WTC11 (cell line): ENCODE measurements at regions of chr7 and their contacts with region 1.

Region 1: GRCh38 chr7:106947244-106947728 is 82.2 kb downstream of the PIK3CG start:
- DNase-seq: peak; percentile 65
- ATAC-seq: peak; percentile 92
- H3K4me3 Mint-ChIP-seq: no peak overlapping the region
- H3K27ac Mint-ChIP-seq: peak overlapping the region; percentile 82; the same call in 1 of the 2 replicates
- H3K4me1 Mint-ChIP-seq: peaks cover 54% of the 10 kb centered on the region
- H3K27me3 Mint-ChIP-seq: no peaks in the 10 kb centered on the region
- CTCF ChIP-seq: peak; percentile 47

Region 2: GRCh38 chr7:106657085-106657991 is 289.9 kb before region 1 on chr7:
- CTCF ChIA-PET with region 1: no interaction called
- POLR2A ChIA-PET with region 1: no interaction called
- DNase-seq: no peak
- ATAC-seq: no peak
- H3K4me3 Mint-ChIP-seq: no peak overlapping the region
- H3K27ac Mint-ChIP-seq: no peak overlapping the region
- H3K4me1 Mint-ChIP-seq: peaks cover 16% of the 10 kb centered on the region
- H3K27me3 Mint-ChIP-seq: no peaks in the 10 kb centered on the region
- CTCF ChIP-seq: no peak

Region 3: DNA sequence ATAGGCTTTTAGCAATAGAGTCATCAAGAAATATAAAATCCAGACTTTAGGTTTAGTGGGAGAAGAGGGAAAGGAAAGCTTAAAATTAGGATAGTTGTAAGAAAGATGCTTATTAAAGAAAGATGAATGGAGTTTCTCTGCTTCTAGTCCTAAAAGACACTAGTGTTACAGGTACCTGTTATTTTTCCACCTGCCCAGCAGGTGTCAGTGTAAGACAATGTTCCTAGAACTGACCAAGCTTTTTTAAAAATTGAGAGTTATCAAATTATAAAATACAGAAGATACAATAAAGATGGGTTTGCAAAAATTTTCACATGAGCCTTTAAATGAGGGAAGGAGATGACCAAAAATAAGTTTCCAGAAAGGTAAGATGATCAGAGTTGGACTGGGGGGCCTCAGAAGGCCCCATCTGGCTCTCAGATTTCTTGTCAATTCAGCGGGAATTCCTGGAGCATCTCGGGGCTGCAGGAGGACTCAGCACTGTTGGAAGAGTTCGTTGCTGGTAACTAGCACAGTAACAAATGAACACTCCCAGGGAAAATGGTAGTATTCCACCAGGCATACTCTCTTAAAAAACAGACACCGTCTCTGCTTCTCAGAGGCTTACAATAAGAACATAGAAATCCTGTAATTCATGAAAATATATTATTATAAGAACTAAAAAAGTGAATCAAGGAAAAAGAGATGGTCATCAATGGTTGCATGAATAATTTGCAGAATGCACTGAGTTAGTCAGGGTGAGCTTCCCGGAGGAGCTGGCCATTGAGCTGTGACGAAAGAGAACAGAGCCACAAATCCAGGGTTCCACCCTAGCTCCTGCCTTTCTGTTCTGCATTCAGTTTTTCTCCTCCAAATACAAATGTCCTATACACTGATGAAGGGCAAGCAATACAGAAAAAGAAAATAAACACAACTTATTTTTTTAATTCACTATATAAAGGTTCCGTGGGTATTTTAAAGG is 154.0 kb before region 1 on chr7:
- CTCF ChIA-PET with region 1: interaction called, 16 read pairs
- POLR2A ChIA-PET with region 1: no interaction called
- DNase-seq: no peak
- ATAC-seq: peak; percentile 80
- H3K4me3 Mint-ChIP-seq: no peak overlapping the region
- H3K27ac Mint-ChIP-seq: no peak overlapping the region
- H3K4me1 Mint-ChIP-seq: peaks cover 3% of the 10 kb centered on the region; the same call in 1 of the 2 replicates
- H3K27me3 Mint-ChIP-seq: no peaks in the 10 kb centered on the region
- CTCF ChIP-seq: peak; percentile 40

Region 4: DNA sequence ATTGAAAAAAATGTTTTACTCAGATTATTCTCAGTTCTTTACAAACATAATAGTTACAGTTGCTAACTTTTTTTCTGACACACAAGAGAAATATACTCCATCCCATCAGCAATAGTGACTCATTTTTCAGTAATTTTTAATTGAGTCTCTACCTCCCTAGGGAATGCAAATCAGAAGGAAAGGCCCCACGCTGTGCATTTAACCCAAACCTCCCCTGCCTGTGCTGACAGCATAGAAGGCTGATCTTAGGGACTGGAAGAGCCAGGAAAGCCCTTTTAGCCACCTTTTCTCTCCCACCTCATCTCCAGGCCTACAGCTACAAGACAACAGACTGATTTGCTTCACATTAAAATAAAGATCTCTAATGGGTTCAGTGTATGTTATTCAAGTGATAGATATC is 106.9 kb before region 1 on chr7:
- CTCF ChIA-PET with region 1: no interaction called
- POLR2A ChIA-PET with region 1: no interaction called
- DNase-seq: peak; percentile 29
- ATAC-seq: peak; percentile 72
- H3K4me3 Mint-ChIP-seq: no peak overlapping the region
- H3K27ac Mint-ChIP-seq: no peak overlapping the region
- H3K4me1 Mint-ChIP-seq: peaks cover 48% of the 10 kb centered on the region
- H3K27me3 Mint-ChIP-seq: no peaks in the 10 kb centered on the region; the same call in none of the 2 replicates
- CTCF ChIP-seq: no peak

Region 5: GRCh38 chr7:106959753-106960152 is 12.5 kb after region 1 on chr7:
- CTCF ChIA-PET with region 1: interaction called, 29 read pairs
- POLR2A ChIA-PET with region 1: no interaction called
- DNase-seq: peak; percentile 58
- ATAC-seq: peak; percentile 99
- H3K4me3 Mint-ChIP-seq: no peak overlapping the region
- H3K27ac Mint-ChIP-seq: no peak overlapping the region
- H3K4me1 Mint-ChIP-seq: peaks cover 14% of the 10 kb centered on the region
- H3K27me3 Mint-ChIP-seq: no peaks in the 10 kb centered on the region; the same call in 1 of the 2 replicates
- CTCF ChIP-seq: peak; percentile 32; the same call in 1 of the 2 replicates

Region 6: GRCh38 chr7:107044347-107045194 is 97.3 kb after region 1 on chr7 and contains the start of gene PRKAR2B:
- CTCF ChIA-PET with region 1: interaction called, 23 read pairs
- POLR2A ChIA-PET with region 1: interaction called, 4 read pairs
- DNase-seq: peak; percentile 83
- ATAC-seq: peak; percentile 85
- H3K4me3 Mint-ChIP-seq: peak within 1 kb of the TSS; percentile 90
- H3K27ac Mint-ChIP-seq: no peak within 1 kb of the TSS
- H3K4me1 Mint-ChIP-seq: peaks cover 41% of the 10 kb centered on the region
- H3K27me3 Mint-ChIP-seq: peaks cover 12% of the 10 kb centered on the region
- CTCF ChIP-seq: no peak
- total RNA-seq, gene PRKAR2B: 17.5 to 29.6 TPM (median 17.7 TPM) in 3 replicates

Region 7: DNA sequence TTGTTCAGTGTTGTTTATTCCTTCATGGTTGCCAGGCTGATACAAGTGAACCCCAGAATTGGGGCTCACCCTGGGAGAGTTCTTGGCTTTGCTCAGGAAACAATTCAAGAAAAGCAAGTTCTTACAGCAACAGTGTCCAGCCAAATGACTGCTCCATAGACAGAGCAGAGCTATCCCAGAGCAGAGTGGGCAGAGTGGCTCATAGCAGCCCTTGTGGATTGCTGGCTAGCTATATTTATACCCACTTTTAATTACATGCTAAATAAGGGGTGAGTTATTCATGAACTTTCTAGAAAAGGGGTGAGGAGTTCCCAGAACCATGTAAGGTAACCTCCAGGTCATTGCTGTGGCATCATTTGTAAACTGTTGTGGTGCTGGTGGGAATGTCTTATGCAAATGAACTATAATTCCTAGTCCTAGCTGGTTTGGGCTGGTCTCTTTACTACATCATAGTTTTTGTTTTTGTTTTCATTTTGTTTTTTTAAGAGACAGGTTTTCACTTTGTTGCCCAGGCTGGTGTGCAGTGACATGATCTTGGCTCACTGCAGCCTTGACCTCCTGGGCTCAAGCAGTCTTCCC is 161.6 kb after region 1 on chr7:
- CTCF ChIA-PET with region 1: no interaction called
- POLR2A ChIA-PET with region 1: no interaction called
- DNase-seq: no peak
- ATAC-seq: no peak
- H3K4me3 Mint-ChIP-seq: no peak overlapping the region
- H3K27ac Mint-ChIP-seq: no peak overlapping the region
- H3K4me1 Mint-ChIP-seq: no peaks in the 10 kb centered on the region
- H3K27me3 Mint-ChIP-seq: no peaks in the 10 kb centered on the region
- CTCF ChIP-seq: no peak

Region 8: DNA sequence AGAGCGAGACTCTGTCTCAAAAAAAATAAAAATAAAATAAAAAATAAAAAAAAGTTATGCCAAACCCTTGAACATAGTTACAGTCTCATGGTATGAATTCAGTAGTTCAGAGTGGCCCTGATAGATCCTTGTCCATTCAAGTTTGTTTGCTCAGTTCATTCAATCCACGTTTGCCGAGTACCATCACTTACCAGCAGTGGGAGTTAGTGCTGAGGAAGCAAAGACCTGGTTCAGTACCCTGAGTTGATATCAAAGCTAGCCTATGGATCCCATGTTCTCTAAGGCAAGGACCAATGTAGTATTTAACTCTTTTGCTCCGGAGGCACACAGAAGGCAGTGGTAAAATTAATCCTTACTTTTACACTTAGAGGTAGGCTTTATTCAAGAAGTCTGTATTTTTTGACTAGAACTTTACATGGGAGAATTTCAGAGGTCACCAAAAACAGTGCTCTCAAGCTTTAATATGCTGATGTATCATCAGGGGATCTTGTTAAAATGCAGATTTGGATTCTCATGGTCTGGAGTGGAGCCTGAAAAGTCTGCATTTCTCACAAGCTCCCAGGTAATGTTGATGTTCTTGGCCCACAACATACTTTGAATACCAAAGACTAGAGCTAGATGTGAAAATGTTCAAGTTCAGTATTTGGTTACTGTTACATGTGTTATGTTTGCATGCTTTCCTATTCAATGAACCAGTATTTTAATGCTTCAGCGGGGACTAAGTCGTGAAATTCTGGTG is 183.4 kb after region 1 on chr7:
- CTCF ChIA-PET with region 1: interaction called, 24 read pairs
- POLR2A ChIA-PET with region 1: no interaction called
- DNase-seq: no peak
- ATAC-seq: peak; percentile 96
- H3K4me3 Mint-ChIP-seq: peak overlapping the region; percentile 33
- H3K27ac Mint-ChIP-seq: peak overlapping the region; percentile 94
- H3K4me1 Mint-ChIP-seq: peaks cover 37% of the 10 kb centered on the region
- H3K27me3 Mint-ChIP-seq: no peaks in the 10 kb centered on the region
- CTCF ChIP-seq: no peak

Region 9: DNA sequence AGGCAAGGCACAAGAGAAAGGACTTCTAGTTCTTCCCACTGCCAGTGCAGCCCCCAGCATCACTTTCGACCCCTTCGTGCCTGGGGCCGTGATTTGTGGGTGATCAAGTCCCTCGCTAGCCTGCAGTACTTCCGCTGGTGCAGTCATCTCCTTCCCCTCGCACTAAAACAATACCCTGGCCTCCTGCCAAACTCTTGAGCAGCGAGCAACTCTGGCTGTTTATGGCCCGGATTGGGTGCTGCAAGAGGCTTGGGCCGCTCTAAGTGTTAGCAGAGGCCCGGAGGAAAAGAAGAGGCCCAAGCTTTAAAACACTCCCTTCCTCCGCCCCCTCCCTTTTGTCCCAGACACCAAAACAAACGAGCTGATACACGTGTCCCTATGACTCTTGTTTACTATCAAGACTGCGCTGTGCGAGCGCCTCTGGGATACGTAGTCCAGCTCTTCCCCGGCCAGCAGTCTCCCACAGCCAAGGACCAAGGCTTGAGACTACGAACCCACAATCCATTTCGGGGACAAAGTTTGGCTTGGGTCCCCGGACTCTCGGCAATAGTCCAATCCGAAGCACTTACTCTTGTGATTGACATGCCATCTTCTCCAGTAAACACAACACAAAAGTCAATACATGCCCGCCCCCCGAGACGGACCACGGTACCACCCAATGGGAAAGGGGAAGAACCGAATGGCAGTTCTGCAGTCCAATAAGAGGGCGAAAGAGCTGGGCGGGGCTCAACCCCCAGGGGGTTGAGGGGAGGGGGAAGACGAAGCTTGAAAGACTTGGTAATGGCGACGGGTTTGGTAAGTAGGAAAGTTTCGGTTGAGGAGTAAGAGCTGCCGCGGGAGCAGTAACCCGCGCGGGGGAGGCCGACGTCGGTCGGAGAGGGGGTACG is 221.2 kb after region 1 on chr7 and contains the start of gene HBP1:
- CTCF ChIA-PET with region 1: interaction called, 29 read pairs
- POLR2A ChIA-PET with region 1: interaction called, 7 read pairs
- DNase-seq: peak; percentile 97
- ATAC-seq: peak; percentile 90
- H3K4me3 Mint-ChIP-seq: peak within 1 kb of the TSS; percentile 94
- H3K27ac Mint-ChIP-seq: peak within 1 kb of the TSS; percentile 100
- H3K4me1 Mint-ChIP-seq: peaks cover 42% of the 10 kb centered on the region
- H3K27me3 Mint-ChIP-seq: no peaks in the 10 kb centered on the region
- CTCF ChIP-seq: no peak
- total RNA-seq, gene HBP1: 27.0 to 31.0 TPM (median 29.2 TPM) in 3 replicates